G401 (cell line): ENCODE measurements at regions of chr17 and their contacts with region 1.

Region 1: GRCh38 chr17:48363161-48363560 is 66.9 kb downstream of the SKAP1 start:
- DNase-seq: no peak

Region 2: DNA sequence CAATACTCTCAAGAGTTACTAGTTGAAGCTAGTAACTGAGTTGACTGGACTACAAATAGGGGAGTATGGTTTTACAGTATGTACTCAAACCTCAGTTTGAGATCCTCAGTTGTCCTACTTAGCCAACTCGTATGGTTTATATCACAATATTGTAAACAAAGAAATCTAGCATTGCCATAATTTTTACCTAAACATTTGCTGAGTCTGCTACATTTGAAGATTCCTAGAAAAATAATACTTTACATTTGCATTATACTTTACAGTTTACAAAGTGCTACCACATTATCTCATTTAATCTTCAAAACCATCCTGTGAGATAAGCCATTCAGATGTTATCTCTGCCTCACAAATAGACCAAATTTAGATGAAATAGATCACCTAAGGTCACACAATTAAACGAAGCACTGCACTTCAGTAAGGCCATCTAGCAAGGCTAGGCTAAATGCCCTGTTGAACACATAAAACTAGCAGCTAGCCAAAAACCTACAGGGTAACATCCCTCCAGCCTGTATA is 278.2 kb before region 1 on chr17:
- in situ Hi-C with region 1: loop called (anchors 10 kb)
- DNase-seq: no peak